Heart left ventricle (tissue), 16 donors: ENCODE measurements at regions of chr4 and their contacts with region 1.

Region 1: DNA sequence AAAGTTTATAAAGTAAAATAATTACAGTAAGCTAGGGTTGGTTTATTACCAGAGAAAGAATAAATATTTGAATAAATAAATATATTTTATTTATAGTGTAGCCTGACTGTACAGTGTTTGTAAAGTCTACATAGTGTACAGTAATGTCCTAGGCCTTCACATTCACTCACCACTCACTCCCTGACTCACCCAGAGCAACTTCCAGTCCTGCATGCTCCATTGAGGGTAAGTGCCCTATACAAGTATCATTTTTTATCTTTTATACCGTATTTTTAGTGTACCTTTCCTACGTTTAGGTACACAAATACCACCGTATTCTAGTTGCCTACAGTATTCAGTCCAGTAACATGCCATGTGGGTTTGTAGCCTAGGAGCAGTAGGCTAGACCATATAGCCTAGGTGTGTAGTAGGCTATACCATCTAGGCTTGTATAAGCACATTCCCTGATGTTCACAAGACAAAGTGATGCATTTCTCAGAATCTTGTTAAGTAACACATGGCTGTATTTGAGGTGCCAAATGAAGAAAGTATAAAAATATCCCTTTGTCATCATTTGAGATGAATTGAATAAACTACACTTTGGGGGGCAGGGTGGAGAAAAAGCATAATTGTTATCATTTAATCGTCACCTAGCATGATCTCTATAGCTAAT is 14.7 kb upstream of the KLHL8 start:
- DNase-seq: no peak
- ATAC-seq: no peak
- H3K4me3 ChIP-seq: peak overlapping the region in 11 of 12 donors; percentile 30 to 63 (median 53)
- H3K27ac ChIP-seq: peak overlapping the region in 2 of 12 donors; percentile 46 to 69
- H3K4me1 ChIP-seq: peaks cover 0 to 21% (median 3%) of the 10 kb centered on the region in 12 donors
- H3K27me3 ChIP-seq: no peaks in the 10 kb centered on the region
- CTCF ChIP-seq: no peak
- POLR2A ChIP-seq: no peak

Region 2: GRCh38 chr4:86497980-86498862 is 736.9 kb before region 1 on chr4:
- intact Hi-C with region 1: loop called in 3 of 10 experiments (anchors 5 to 10 kb)
- DNase-seq: no peak
- ATAC-seq: peak; percentile 55 to 90 (median 80)
- H3K4me3 ChIP-seq: no peak overlapping the region
- H3K27ac ChIP-seq: no peak overlapping the region
- H3K4me1 ChIP-seq: peaks cover 0 to 13% (median 0%) of the 10 kb centered on the region in 12 donors
- H3K27me3 ChIP-seq: peaks cover 0 to 6% (median 0%) of the 10 kb centered on the region in 9 donors
- CTCF ChIP-seq: peak; percentile 64 to 85 (median 77)
- POLR2A ChIP-seq: no peak

Region 3: GRCh38 chr4:86921608-86922252 is 313.4 kb before region 1 on chr4:
- intact Hi-C with region 1: loop called in 8 of 10 experiments (anchors 1 to 5 kb)
- DNase-seq: no peak
- ATAC-seq: no peak
- H3K4me3 ChIP-seq: no peak overlapping the region
- H3K27ac ChIP-seq: no peak overlapping the region
- H3K4me1 ChIP-seq: peaks cover 0 to 46% (median 0%) of the 10 kb centered on the region in 12 donors
- H3K27me3 ChIP-seq: no peaks in the 10 kb centered on the region
- CTCF ChIP-seq: no peak
- POLR2A ChIP-seq: no peak

Region 4: GRCh38 chr4:86927843-86928395 is 307.2 kb before region 1 on chr4:
- intact Hi-C with region 1: loop called in 6 of 10 experiments (anchors 2 to 5 kb)
- DNase-seq: peak in 1 of 5 donors; percentile 38
- ATAC-seq: peak in 3 of 4 donors; percentile 63 to 87 (median 73)
- H3K4me3 ChIP-seq: no peak overlapping the region
- H3K27ac ChIP-seq: peak overlapping the region in 3 of 12 donors; percentile 34 to 63 (median 55)
- H3K4me1 ChIP-seq: peaks cover 0 to 33% (median 0%) of the 10 kb centered on the region in 12 donors
- H3K27me3 ChIP-seq: no peaks in the 10 kb centered on the region
- CTCF ChIP-seq: no peak
- POLR2A ChIP-seq: no peak

Region 5: GRCh38 chr4:87043044-87043820 is 191.9 kb before region 1 on chr4:
- intact Hi-C with region 1: no loop called
- DNase-seq: no peak
- ATAC-seq: no peak
- H3K4me3 ChIP-seq: no peak overlapping the region
- H3K27ac ChIP-seq: peak overlapping the region in 8 of 12 donors; percentile 23 to 89 (median 36)
- H3K4me1 ChIP-seq: peaks cover 40 to 92% (median 73%) of the 10 kb centered on the region in 12 donors
- H3K27me3 ChIP-seq: no peaks in the 10 kb centered on the region
- CTCF ChIP-seq: no peak
- POLR2A ChIP-seq: no peak

Region 6: GRCh38 chr4:87150498-87151261 is 84.5 kb before region 1 on chr4:
- intact Hi-C with region 1: loop called (anchors 1 to 5 kb)
- DNase-seq: peak in 2 of 5 donors; percentile 27 to 46
- ATAC-seq: peak; percentile 38 to 82 (median 74)
- H3K4me3 ChIP-seq: no peak overlapping the region
- H3K27ac ChIP-seq: no peak overlapping the region
- H3K4me1 ChIP-seq: no peaks in the 10 kb centered on the region
- H3K27me3 ChIP-seq: no peaks in the 10 kb centered on the region
- CTCF ChIP-seq: peak; percentile 82 to 94 (median 90)
- POLR2A ChIP-seq: no peak

Region 7: GRCh38 chr4:87209696-87210095 is 25.4 kb before region 1 on chr4:
- intact Hi-C with region 1: no loop called
- DNase-seq: peak; percentile 27 to 71 (median 66)
- ATAC-seq: peak; percentile 23 to 80 (median 72)
- H3K4me3 ChIP-seq: peak overlapping the region in 1 of 12 donors; percentile 45
- H3K27ac ChIP-seq: peak overlapping the region in 1 of 12 donors; percentile 80
- H3K4me1 ChIP-seq: peaks cover 3 to 39% (median 22%) of the 10 kb centered on the region in 12 donors
- H3K27me3 ChIP-seq: no peaks in the 10 kb centered on the region
- CTCF ChIP-seq: no peak
- POLR2A ChIP-seq: no peak